Esophagus squamous epithelium (tissue), 5 donors: ENCODE measurements at regions of chr13 and their contacts with region 1.

Region 1: GRCh38 chr13:113907635-113908617 is 44.0 kb upstream of the GAS6 start:
- DNase-seq: no peak
- H3K4me3 ChIP-seq: no peak overlapping the region
- H3K27ac ChIP-seq: peak overlapping the region in 2 of 4 donors; percentile 19 to 27
- H3K4me1 ChIP-seq: peaks cover 0 to 7% (median 0%) of the 10 kb centered on the region in 3 donors
- H3K27me3 ChIP-seq: peaks cover 0 to 14% (median 0%) of the 10 kb centered on the region in 4 donors
- CTCF ChIP-seq: no peak
- POLR2A ChIP-seq: no peak

Region 2: DNA sequence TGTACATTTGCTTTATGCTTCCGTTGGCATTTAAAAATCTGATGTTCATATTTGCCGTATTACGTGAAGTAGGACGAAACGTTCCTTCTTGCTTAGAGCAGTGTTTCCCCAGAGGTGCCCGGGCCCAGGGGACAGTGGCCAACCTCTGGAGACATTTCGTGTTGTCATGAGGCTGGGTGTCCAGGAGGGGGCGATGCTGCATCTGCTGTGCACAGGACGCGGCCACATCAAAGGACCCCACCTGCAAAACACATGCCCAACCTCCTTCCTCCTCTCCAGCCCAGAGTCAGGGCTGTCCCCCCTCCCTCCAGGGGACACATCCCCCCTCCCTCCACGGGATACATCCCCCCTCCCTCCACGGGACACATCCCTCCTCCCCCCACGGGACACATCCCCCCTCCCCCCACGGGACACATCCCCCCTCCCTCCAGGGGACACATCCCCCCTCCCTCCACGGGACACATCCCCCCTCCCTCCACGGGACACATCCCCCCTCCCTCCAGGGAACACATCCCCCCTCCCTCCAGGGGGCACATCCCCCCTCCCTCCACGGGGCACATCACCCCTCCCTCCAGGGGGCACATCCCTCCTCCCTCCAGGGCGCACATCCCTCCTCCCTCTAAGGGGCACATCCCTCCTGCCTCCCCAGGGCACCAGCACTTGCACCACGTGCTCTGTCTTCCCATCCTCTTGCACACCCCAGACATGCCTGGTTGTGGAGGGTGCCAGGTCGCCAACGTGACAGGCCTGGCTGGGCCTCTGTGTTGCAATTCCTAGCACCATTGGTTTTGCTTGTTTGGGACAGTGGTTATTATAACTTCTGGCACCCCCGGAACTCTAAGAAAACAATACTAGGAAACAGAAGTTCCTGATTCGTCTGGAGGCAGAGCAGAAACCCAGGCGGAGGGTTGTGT is 90.7 kb before region 1 on chr13:
- intact Hi-C with region 1: loop called (anchors 5 kb)
- DNase-seq: peak; percentile 59
- H3K4me3 ChIP-seq: no peak overlapping the region
- H3K27ac ChIP-seq: peak overlapping the region; percentile 58 to 91 (median 82)
- H3K4me1 ChIP-seq: peaks cover 33 to 75% (median 42%) of the 10 kb centered on the region in 3 donors
- H3K27me3 ChIP-seq: no peaks in the 10 kb centered on the region
- CTCF ChIP-seq: peak; percentile 77 to 92 (median 86)
- POLR2A ChIP-seq: peak in 1 of 4 donors; percentile 17

Region 3: GRCh38 chr13:114025714-114026431 is 117.9 kb after region 1 on chr13:
- intact Hi-C with region 1: no loop called
- DNase-seq: no peak
- H3K4me3 ChIP-seq: no peak overlapping the region
- H3K27ac ChIP-seq: peak overlapping the region; percentile 58 to 83 (median 67)
- H3K4me1 ChIP-seq: peaks cover 10 to 30% (median 17%) of the 10 kb centered on the region in 3 donors
- H3K27me3 ChIP-seq: no peaks in the 10 kb centered on the region
- CTCF ChIP-seq: no peak
- POLR2A ChIP-seq: no peak